ENCODE measurements at regions of chr2 and their contacts with region 1.

Region 1: DNA sequence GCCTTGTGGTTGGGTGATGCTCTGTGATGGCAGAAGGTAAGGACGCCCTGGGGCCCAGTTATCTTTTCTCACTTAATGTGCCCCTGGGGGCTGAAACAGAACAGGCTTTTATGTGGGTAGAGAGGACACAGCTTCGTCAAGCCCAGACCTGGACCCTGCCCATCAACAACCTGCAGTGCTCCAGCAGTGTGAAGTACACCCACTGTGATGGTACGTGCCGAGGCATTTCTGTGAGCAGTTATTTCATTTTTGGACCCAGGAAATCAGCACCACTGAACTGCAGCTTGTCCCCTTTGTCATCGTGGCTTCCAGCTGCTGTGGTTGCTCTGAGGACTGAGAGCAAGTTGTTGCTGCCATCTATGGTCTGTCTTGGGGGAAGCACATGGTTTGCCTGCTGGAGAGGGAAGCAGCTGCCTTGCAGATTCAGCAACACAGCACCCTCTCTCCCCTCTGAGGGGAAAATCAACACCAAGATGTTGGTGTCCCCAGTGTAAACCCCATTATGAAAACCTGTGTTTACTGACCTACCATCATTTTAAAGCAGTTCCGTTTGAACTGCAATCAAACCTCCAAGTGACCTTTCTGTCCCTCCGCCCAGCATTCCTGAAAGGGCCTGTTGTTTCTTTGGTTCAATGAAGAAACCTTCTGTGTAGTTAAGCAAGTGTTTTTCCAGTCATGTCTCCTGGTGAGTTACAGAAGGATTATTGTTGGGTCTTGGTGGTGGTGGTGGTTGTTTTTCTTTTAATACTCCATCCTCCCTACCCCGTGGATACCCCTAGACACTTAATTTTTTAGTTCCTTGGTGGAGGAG is 158.2 kb downstream of the MGAT5 start:
- DNase-seq: peak; percentile 76 to 82
- H3K4me3 ChIP-seq: no peak overlapping the region
- H3K27ac ChIP-seq: peak overlapping the region in 1 of 2 donors; percentile 11
- H3K4me1 ChIP-seq: peaks cover 0 to 17% (median 10%) of the 10 kb centered on the region in 4 donors
- H3K27me3 ChIP-seq: no peaks in the 10 kb centered on the region
- CTCF ChIP-seq: peak; percentile 78 to 80

Region 2: DNA sequence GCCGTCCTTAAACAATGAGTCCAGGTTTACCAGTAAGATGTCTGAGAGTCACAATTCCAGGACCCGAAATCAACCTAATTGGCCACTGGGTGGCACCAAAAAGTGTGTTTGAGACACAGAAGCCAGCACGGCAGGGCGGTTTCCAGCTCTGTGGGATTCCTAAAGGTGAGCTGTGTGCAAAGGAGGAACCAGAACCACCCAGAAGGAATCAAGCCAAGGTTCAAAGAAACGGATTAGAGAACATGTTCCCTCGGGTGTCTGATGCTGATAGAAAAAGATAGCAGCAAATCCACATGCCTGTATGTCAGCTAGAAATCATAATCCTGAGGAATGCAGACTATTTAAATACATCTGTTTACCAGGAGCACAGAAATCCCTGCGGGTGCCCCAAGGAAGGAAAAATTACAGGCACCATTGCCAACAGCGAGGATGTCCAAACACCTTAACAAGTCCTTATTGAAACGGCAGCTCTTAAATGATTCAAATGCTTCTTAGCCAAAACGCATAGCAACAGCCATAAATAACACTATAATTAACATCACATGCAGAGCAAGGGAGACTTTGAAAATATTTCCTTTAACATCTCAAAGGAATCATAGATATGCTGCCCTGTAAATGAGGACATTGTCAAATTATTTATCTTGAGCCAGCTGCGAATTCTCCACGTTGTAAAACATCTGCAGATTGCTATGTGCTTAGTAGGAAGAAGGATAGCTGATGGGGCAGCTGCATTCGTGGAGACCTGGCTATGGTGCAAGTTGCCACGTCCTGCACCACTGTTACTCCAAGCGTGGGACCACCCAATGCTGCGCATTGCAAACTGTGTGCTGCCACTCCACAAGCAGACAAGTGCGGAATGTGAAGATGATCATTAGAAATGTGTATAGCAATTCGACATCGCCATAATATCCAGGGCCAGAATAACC is 525.0 kb before region 1 on chr2:
- intact Hi-C with region 1: loop called (anchors 10 kb)
- DNase-seq: peak in 1 of 2 donors; percentile 75
- H3K4me3 ChIP-seq: no peak overlapping the region
- H3K27ac ChIP-seq: no peak overlapping the region
- H3K4me1 ChIP-seq: peaks cover 0 to 8% (median 2%) of the 10 kb centered on the region in 4 donors
- H3K27me3 ChIP-seq: peaks cover 0 to 5% of the 10 kb centered on the region in 2 donors
- CTCF ChIP-seq: peak; percentile 49 to 54

Region 3: DNA sequence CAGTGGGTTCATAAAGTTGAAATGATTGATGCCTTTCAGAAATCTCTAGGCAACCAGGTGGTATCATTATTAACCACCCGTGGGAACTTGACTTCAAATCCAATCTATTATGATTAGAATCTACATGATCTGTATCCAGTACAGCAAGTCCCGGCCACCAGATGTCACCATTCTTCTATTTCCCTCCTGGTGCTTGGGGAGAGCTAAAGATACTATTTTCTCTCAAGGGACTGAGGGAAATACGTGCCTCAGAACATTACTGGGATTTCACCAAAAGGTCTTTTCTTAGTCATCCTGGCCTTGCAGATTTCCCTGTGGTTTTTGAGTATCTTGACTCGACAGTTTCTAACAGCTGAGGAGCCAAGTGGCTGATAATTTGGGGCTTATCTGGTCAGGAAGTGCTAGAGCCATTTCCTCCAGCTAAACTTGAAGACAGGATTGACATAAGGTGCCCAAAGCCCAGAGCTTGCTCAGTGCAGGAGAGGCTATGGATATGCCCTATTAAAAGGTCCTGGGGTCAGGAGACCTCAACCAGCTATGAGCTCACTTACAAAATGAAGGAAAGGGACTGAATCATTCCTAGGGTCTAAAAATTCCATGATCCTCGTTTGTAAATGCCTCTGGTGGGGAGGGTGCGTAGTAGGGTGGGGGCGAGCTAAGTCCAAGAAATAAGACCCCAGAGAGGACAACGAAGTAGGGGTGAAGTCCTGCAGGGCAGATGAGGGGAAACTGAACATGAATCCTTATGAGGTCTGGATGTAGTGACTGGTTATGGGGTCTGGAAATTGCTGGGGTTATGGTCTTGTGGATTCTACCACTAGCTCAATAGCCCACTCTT is 293.5 kb before region 1 on chr2:
- intact Hi-C with region 1: loop called (anchors 5 kb)
- DNase-seq: peak; percentile 91 to 96
- H3K4me3 ChIP-seq: no peak overlapping the region
- H3K27ac ChIP-seq: peak overlapping the region; percentile 93 to 95
- H3K4me1 ChIP-seq: peaks cover 0 to 34% (median 20%) of the 10 kb centered on the region in 4 donors
- H3K27me3 ChIP-seq: no peaks in the 10 kb centered on the region
- CTCF ChIP-seq: peak; percentile 77 to 92

Region 4: DNA sequence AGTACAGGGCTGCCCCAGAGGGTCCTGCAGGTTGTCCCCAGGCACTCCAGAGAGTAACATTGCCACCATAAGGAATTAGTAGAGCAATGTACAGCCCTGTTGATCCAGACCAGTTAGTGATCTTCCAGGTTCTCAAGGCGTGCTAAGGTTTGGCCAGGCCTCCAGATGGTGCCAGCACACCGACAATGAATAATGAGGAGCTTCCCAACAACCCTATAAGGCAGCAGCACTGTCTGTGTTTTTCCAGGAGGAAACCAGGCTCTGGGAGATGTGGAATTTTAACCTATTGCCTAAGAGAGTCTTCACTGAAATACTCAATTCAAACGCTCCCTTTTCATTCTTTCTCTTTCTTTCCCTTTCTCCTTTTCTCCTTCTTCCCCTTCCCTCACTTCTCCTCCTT is 36.1 kb before region 1 on chr2:
- intact Hi-C with region 1: loop called (anchors 5 kb)
- DNase-seq: no peak
- H3K4me3 ChIP-seq: no peak overlapping the region
- H3K27ac ChIP-seq: no peak overlapping the region
- H3K4me1 ChIP-seq: peaks cover 0 to 27% (median 13%) of the 10 kb centered on the region in 4 donors
- H3K27me3 ChIP-seq: no peaks in the 10 kb centered on the region
- CTCF ChIP-seq: peak; percentile 51 to 60

Measured in tibial artery (tissue), 4 donors.